WTC11 (cell line): ENCODE measurements at regions of chr6 and their contacts with region 1.

Region 1: DNA sequence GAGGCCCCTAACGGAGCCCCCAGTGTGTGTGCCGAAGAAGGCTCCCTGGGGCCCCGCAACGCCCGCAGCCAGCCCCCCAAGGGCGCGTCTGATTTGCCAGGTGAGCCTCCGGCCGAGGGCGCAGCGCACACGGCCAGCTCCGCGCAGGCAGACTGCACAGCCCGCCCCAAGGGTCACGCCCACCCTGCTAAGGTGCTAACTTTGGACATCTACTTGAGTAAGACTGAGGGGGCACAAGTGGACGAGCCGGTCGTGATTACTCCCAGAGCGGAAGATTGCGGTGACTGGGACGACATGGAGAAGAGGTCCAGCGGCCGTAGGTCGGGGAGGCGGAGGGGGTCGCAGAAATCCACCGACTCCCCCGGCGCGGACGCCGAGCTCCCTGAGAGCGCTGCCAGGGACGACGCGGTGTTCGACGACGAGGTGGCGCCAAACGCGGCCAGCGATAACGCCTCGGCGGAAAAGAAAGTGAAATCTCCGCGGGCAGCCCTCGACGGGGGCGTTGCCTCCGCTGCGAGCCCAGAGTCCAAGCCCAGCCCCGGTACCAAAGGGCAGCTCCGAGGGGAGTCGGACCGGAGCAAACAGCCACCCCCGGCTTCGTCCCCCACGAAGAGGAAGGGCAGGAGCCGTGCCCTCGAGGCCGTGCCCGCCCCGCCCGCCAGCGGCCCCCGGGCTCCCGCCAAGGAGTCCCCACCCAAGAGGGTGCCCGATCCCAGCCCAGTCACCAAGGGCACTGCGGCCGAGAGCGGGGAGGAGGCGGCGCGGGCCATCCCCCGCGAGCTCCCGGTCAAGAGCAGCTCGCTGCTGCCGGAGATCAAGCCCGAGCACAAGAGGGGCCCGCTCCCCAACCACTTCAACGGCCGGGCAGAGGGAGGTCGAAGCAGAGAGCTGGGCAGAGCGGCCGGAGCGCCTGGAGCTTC is 117.0 kb downstream of the RTN4IP1 start:
- DNase-seq: peak; percentile 70
- ATAC-seq: peak; percentile 59
- H3K4me3 Mint-ChIP-seq: peak overlapping the region; percentile 88
- H3K27ac Mint-ChIP-seq: no peak overlapping the region
- H3K4me1 Mint-ChIP-seq: peaks cover 31% of the 10 kb centered on the region
- H3K27me3 Mint-ChIP-seq: peaks cover 72% of the 10 kb centered on the region
- CTCF ChIP-seq: no peak

Region 2: DNA sequence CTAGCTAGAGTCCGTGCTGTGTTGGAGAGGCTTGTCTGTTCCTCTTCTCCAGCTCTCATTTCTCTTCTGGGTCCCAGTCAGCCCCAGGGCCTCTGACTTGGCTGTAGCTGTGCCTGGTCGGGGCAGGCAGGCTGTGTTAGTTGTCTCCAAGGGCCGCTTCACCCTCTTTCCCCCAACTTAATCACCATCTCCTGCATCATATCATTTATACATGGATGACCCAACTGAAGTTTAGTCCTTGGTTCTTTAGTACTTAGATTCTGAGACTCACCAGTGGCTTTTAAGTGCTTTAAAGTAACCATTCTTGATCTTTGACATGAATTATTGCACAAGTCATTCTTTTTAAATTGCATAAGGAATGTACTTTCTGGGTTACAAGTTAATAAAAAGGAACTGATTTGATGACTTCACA is 10.3 kb before region 1 on chr6:
- CTCF ChIA-PET with region 1: no interaction called
- POLR2A ChIA-PET with region 1: no interaction called
- DNase-seq: no peak
- ATAC-seq: no peak
- H3K4me3 Mint-ChIP-seq: no peak overlapping the region
- H3K27ac Mint-ChIP-seq: no peak overlapping the region
- H3K4me1 Mint-ChIP-seq: no peaks in the 10 kb centered on the region
- H3K27me3 Mint-ChIP-seq: peaks cover under 1% of the 10 kb centered on the region
- CTCF ChIP-seq: no peak

Region 3: DNA sequence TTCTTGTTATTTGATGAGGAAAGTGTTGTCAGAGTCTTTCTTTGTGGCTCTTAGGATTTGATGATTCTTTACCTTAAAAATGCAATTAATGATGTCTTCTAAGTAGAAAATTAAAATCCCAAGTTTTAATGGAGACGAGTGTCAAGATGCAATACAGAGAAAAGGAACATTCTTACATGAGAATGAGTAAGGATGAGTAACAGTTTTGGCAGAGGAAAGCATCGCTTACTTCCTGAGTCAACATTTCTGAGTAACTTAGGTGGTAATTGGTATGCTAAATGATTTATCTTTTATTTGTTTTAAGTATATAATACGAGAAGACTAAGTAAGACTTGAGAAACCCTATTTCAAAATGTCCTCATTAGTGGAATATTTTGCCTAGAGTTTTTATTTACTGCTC is 15.7 kb after region 1 on chr6:
- CTCF ChIA-PET with region 1: no interaction called
- POLR2A ChIA-PET with region 1: no interaction called
- DNase-seq: no peak
- ATAC-seq: no peak
- H3K4me3 Mint-ChIP-seq: no peak overlapping the region
- H3K27ac Mint-ChIP-seq: no peak overlapping the region
- H3K4me1 Mint-ChIP-seq: peaks cover 10% of the 10 kb centered on the region
- H3K27me3 Mint-ChIP-seq: no peaks in the 10 kb centered on the region
- CTCF ChIP-seq: no peak

Region 4: DNA sequence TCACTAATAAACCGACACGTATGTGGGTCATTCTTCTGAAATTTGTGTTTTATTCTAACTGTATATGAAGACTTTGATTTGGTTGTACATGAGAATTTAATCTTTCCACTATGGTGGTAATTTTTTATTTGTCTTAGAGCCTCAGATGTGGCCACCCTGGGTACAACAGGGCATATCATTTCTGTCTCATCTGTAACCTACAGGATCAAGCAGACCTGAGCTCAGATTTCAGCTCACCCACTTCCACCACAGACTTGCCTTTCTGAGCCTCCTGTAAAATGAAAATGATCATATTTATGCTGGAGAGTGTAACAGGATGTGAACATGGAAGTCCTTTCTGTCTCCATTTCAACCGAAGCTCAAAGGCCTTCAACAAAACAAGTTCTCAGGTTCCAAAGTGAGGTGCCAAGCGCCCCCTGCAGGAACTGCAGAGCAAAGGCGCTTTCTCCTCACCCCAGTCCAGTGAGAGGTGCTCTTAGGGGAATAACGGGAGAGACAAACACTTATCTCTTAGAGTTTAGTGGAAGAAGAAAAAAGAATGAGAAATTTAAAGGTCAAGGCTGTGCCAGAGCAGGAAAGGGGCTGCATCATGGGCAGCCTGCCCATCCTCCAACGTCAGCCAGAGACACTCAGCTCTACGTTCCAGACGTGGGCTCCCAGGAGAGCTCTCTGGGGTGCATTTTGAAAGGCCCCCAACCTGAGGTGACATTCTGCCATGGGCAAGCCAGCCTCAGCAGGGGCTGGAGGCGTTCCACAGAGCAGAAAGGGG is 485.3 kb after region 1 on chr6:
- CTCF ChIA-PET with region 1: interaction called, 12 read pairs
- POLR2A ChIA-PET with region 1: no interaction called
- DNase-seq: peak; percentile 86
- ATAC-seq: peak; percentile 91
- H3K4me3 Mint-ChIP-seq: no peak overlapping the region
- H3K27ac Mint-ChIP-seq: no peak overlapping the region
- H3K4me1 Mint-ChIP-seq: peaks cover 20% of the 10 kb centered on the region
- H3K27me3 Mint-ChIP-seq: no peaks in the 10 kb centered on the region; the same call in 1 of the 2 replicates
- CTCF ChIP-seq: peak; percentile 90